ENCODE measurements at regions of chr5 and their contacts with region 1.

Region 1: GRCh38 chr5:139422307-139422893 is 16.9 kb downstream of the DNAJC18 start:
- DNase-seq: no peak
- H3K4me3 ChIP-seq: no peak overlapping the region
- H3K27ac ChIP-seq: no peak overlapping the region
- H3K4me1 ChIP-seq: peaks cover 24 to 33% (median 29%) of the 10 kb centered on the region in 4 donors
- H3K27me3 ChIP-seq: no peaks in the 10 kb centered on the region
- CTCF ChIP-seq: peak; percentile 73 to 91 (median 82)
- EP300 ChIP-seq: no peak
- POLR2A ChIP-seq: no peak

Region 2: DNA sequence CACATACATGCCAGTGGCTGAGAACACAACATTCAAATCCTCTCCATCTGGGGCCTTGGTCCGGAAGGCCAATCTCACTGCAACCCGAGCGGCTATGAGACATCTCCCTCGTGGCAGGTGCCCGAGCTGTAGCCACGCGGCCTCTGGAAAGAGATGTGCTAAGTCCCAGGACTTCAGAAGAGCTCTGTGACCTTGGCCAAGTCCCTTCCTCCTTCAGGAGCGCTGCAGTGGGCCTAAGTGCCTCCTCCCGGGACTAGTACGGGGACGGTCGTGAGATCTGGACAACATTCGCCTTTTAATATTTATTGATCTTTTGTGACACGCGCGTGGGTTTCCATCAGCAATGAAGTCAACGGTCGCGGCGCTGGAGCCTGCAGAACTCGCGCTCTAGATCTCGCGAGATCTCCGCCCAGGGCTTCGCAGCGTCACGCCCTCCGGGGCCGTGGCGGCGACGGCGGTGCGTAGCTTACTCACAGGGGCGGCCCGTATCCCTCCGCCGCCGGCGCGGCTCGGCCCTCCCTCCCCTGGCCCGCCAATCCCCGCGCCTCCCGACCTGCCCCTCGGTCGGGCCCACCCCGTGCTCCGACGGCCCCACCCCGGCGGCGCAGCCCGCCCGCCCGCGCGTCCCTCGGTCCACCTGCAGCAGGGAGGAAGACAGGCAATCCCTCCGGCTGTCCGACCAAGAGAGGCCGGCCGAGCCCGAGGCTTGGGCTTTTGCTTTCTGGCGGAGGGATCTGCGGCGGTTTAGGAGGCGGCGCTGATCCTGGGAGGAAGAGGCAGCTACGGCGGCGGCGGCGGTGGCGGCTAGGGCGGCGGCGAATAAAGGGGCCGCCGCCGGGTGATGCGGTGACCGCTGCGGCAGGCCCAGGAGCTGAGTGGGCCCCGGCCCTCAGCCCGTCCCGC is 138.6 kb after region 1 on chr5 and contains the start of gene UBE2D2:
- intact Hi-C with region 1: loop called (anchors 5 kb)
- DNase-seq: peak; percentile 99
- H3K4me3 ChIP-seq: peak within 1 kb of the TSS; percentile 75 to 99 (median 95)
- H3K27ac ChIP-seq: peak within 1 kb of the TSS; percentile 96 to 99 (median 98)
- H3K4me1 ChIP-seq: peaks cover 33 to 48% (median 45%) of the 10 kb centered on the region in 4 donors
- H3K27me3 ChIP-seq: no peaks in the 10 kb centered on the region
- CTCF ChIP-seq: no peak
- EP300 ChIP-seq: no peak
- POLR2A ChIP-seq: peak; percentile 67
- total RNA-seq, gene UBE2D2: 86.9 to 104 (median 91.5) TPM

Measured in esophagus muscularis mucosa (tissue), 4 donors.